Transverse colon (tissue), 4 donors: ENCODE measurements at regions of chr16 and their contacts with region 1.

Region 1: DNA sequence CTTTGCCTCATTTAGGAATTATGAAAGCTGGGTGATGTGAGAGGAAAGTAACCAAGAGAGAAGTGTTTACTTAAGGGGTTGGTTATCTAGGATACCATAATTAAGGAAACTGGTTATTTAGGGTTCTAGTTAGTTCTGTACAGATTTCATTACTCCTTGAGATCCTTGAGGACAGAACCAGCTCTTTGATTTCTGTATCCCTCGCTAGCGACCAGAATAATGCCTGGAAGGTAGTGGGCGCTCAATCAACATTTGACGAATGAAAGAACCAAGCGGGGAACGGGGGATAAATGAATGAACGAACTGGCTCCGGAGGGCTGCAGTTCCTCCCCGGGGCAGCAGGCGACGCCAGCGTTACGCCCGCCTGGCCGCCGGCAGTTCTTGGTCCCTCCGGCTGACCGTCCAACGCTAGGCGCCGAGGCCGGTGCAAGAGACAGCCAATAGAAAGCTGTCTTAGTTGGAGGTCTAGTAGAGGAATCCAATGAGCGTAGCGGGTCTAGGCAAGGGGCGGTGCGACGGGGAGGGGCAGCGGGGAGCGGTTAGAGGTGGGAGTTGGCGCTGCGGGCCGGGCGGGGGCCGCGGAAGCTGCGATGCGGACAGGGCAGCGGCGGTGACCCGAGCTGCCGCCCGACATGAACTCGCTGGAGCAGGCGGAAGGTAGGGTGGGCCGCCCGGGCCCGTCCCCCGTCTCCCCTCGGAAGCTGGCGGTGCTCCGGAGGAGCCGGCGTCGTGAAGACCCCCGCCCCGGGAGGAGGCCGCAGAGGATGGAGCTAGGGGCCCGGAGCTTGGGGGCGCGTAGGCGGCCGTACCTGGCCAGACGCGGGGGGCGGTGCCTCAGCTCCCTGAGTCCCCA is at the start of gene CNEP1R1:
- DNase-seq: peak; percentile 96
- H3K4me3 ChIP-seq: peak within 1 kb of the TSS; percentile 86 to 97 (median 94)
- H3K27ac ChIP-seq: peak within 1 kb of the TSS; percentile 85 to 93 (median 90)
- H3K4me1 ChIP-seq: peaks cover 0 to 35% (median 19%) of the 10 kb centered on the region in 4 donors
- H3K27me3 ChIP-seq: no peaks in the 10 kb centered on the region
- CTCF ChIP-seq: peak; percentile 100
- EP300 ChIP-seq: peak; percentile 15
- POLR2A ChIP-seq: peak; percentile 76
- total RNA-seq, gene CNEP1R1: 7.6 to 21.6 (median 14.9) TPM

Region 2: GRCh38 chr16:49312389-49312985 is 712.4 kb before region 1 on chr16:
- in situ Hi-C with region 1: no loop called
- intact Hi-C with region 1: no loop called
- DNase-seq: no peak
- H3K4me3 ChIP-seq: no peak overlapping the region
- H3K27ac ChIP-seq: no peak overlapping the region
- H3K4me1 ChIP-seq: no peaks in the 10 kb centered on the region
- H3K27me3 ChIP-seq: peaks cover 12% of the 10 kb centered on the region
- CTCF ChIP-seq: no peak
- EP300 ChIP-seq: no peak
- POLR2A ChIP-seq: no peak

Region 3: DNA sequence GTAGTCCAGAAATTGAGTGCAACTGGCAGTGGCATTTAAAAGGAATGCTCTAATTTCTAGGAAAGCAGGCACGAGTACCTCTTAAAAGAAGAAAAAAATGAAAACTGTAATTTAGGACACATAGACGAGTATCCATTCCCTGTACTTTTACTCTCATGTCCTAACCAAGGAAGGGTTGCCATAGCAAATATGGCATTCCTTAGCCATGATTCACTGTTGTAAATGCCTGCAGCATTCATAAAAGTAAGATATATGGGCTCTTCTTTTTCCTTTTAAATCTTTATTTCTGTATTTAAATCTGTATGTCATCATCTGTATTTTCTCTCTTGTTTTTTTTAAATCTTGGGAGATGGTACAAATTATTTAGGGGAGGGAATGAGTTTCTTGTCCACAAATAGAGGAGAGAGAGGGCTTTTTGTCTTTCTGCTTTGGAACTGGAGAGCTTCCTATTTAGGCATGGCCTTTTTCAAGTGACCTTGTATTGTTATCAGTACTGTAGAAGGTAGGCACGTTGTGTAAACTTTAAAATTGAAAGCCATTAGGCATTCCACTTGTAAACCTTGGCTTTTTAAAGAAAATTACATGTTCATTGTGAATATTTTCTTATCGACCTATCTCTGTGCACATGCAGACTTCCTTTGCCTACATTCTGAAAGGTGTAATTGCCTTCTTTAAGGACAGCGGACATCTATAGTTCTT is 178.2 kb after region 1 on chr16:
- in situ Hi-C with region 1: loop called in 1 of 4 experiments (anchors 10 kb)
- intact Hi-C with region 1: no loop called
- DNase-seq: no peak
- H3K4me3 ChIP-seq: no peak overlapping the region
- H3K27ac ChIP-seq: peak overlapping the region; percentile 65 to 76 (median 69)
- H3K4me1 ChIP-seq: peaks cover 18 to 73% (median 32%) of the 10 kb centered on the region in 4 donors
- H3K27me3 ChIP-seq: no peaks in the 10 kb centered on the region
- CTCF ChIP-seq: no peak
- EP300 ChIP-seq: peak; percentile 40
- POLR2A ChIP-seq: no peak

Region 4: DNA sequence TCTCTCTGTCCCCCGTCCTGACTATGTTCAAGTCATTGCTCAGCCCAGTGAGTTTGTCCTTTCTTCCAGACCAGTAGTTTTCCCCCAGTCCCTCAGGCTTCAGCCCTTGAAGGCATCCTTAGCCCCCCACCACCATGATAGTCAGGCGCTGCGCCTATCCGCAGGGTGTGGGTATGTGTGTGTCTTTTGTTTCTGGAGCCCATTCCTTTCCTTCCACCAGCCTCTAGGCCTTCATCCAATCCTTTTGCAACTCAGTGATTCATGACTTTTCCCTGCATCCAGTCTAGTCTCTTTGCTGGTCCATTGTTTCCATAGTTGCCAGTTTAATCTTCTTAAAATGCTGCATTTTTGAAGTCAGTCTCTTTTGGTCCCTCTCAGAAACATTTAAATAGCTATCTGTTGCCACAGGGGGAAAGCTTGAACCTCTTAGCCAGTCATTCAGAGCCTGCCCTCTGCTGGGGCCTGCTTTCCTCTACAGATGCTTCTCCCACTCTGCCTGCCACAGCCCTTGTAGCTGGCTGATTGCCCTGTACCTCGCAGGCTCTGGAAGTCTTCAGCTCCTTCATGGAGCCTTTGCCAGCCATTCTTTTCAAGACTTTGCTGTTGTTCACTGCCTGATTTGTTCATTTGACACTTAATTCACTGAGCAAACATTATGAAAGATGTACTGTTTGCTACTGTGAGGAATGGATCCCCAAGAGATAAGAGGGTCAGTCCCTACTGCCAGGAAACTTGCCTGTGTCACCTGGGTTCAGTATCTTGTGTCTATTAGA is 185.5 kb after region 1 on chr16:
- in situ Hi-C with region 1: loop called (anchors 10 kb)
- intact Hi-C with region 1: no loop called
- DNase-seq: peak; percentile 82
- H3K4me3 ChIP-seq: no peak overlapping the region
- H3K27ac ChIP-seq: peak overlapping the region; percentile 59 to 70 (median 68)
- H3K4me1 ChIP-seq: peaks cover 32 to 45% (median 36%) of the 10 kb centered on the region in 4 donors
- H3K27me3 ChIP-seq: no peaks in the 10 kb centered on the region
- CTCF ChIP-seq: peak; percentile 62 to 84 (median 65)
- EP300 ChIP-seq: no peak
- POLR2A ChIP-seq: no peak

Region 5: DNA sequence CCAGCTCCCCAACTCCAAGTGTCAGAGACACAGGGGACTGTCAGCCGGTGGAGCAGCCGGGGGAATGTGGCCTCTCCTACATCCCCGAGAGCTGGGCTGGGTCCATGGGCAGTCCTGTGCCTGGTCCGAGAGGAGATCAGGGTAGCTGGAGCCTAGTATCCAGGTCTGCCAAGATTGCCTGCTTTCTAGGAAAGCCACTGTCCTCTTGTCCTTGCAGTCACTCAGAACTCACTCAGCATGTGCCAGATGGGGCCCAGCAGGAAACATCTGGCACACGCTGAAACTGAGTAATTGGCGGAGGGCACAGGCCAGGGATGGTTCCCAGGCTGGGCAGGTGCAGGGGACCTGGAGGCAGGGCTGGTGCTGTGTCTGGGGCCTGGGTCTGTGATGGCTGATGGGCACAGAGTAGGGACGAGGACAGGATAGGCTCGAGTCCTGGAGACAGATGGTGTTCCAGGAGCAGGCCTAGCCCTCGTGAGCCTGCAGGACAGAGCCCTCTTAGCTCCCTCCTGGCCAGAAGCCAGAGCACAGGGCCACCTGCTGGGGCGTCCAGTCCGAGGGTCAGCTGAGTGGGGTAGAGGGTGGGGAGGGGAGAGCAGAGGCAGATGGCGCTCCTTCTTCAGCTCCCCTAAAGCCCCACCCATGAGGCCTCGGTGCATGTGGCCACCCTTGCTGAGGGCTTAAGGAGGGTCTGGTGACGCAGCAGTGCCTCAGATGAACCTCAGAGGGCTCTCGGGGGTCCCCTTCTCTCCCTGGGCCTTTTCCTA is 272.6 kb after region 1 on chr16:
- in situ Hi-C with region 1: no loop called
- intact Hi-C with region 1: no loop called
- DNase-seq: peak; percentile 5
- H3K4me3 ChIP-seq: no peak overlapping the region
- H3K27ac ChIP-seq: no peak overlapping the region
- H3K4me1 ChIP-seq: peaks cover 6 to 16% (median 11%) of the 10 kb centered on the region in 4 donors
- H3K27me3 ChIP-seq: no peaks in the 10 kb centered on the region
- CTCF ChIP-seq: no peak
- EP300 ChIP-seq: no peak
- POLR2A ChIP-seq: no peak

Region 6: DNA sequence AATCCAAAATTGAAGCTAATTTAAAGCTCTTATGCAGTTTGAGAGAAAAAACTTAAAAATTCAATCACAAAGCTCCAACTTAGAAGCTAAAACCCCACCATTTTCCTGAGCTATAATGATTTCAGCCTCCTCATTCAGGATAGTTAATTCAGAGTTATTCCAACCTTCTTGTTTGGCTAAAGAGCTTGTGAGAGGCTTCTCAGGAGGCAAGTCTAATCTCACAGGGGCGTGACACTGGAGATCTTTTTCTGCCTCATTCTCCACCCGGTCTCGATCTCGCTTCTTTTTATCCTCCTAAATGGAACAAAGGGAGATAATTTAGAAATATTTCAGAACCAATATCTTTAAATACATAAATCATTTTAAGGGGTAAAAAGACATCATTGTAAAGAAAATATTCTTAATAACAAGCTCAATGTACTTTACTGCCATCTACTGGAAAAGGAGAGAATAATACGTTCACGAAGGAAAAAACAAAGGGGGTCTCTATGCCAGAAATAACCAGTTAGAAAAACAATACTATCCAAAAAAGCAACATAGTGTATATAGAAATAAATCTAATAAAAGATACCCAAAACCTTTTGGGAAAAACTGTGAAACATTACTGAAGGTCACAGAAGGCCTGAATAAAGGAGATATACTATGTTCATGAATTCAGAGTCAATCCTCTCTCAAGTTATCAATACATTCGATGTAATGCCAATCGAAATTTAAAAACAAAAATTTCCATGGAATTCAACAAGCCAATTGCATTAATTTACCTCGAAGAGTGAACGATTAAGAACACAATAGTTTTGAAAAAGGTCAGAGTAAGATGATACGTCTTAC is 329.9 kb after region 1 on chr16:
- in situ Hi-C with region 1: loop called in 3 of 4 experiments (anchors 5 to 25 kb)
- intact Hi-C with region 1: no loop called
- DNase-seq: no peak
- H3K4me3 ChIP-seq: no peak overlapping the region
- H3K27ac ChIP-seq: peak overlapping the region; percentile 6 to 44 (median 32)
- H3K4me1 ChIP-seq: peaks cover 0 to 3% (median 0%) of the 10 kb centered on the region in 4 donors
- H3K27me3 ChIP-seq: no peaks in the 10 kb centered on the region
- CTCF ChIP-seq: peak; percentile 55 to 63 (median 59)
- EP300 ChIP-seq: no peak
- POLR2A ChIP-seq: no peak

Region 7: DNA sequence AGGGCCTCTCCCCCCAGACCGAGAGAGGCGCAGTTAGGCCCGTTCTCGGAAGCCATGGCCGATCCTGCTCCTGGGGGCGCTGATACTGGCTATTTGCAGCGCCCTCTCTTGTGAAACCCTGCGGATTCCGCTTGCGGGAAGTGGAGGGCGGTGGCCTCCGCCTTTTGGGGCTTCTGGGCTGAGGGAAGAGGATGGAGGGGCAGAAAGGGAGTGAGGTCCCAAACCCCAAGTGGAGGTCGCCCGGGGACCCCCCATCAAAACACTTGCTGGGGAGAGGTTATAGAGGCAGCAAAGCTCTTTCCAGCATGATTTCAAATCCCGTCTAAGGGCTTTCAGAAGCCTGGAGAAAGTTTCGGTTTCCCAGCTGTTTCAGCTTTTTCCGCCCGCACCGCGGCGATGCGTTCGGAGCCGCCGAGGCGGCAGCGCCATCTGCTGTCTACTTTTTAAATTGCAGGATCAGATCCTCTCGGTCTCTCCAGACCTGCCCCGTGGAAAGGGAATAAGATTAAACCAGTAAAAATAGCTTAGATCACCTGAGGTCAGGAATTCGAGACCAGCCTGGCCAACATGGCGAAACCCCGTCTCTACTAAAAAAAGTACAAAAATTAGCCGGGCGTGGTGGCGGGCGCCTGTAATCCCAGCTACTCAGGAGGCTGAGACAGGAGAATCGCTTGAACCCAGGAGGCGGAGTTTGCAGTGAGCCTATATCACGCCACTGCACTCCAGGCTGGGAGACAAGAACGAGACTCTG is 640.4 kb after region 1 on chr16:
- in situ Hi-C with region 1: loop called in 1 of 4 experiments (anchors 10 kb)
- intact Hi-C with region 1: no loop called
- DNase-seq: peak; percentile 82
- H3K4me3 ChIP-seq: peak overlapping the region; percentile 18 to 54 (median 32)
- H3K27ac ChIP-seq: peak overlapping the region; percentile 36 to 69 (median 68)
- H3K4me1 ChIP-seq: peaks cover 0 to 10% (median 6%) of the 10 kb centered on the region in 4 donors
- H3K27me3 ChIP-seq: no peaks in the 10 kb centered on the region
- CTCF ChIP-seq: peak; percentile 81 to 94 (median 91)
- EP300 ChIP-seq: no peak
- POLR2A ChIP-seq: no peak